Sigmoid colon (tissue), 7 donors: ENCODE measurements at regions of chr16 and their contacts with region 1.

Region 1: DNA sequence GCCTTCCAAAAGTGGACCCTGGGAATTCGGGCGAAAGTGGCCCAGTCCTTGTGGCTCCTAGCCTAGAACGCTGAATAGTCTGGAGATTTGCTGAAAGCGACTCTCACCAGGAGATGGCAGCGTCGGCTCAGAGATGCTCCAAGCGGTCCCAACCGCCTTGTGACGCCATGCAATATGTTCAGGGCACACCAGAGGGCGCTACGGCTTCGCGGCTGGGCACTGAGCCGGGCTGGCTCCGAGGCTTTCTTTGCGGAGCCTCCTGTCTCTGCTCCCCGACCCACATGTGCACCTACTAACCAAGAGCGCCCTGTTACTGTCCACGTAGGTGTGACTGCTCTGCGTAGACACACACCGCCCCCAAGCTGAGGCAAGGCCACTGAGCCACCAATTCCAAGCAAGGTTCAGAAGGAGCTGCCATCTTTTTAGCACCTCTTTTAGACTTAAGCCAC is 36.9 kb downstream of the SYCE1L start:
- DNase-seq: peak; percentile 91
- H3K4me3 ChIP-seq: no peak overlapping the region
- H3K27ac ChIP-seq: no peak overlapping the region
- H3K4me1 ChIP-seq: peaks cover 0 to 5% (median 3%) of the 10 kb centered on the region in 4 donors
- H3K27me3 ChIP-seq: peaks cover 0 to 14% (median 0%) of the 10 kb centered on the region in 3 donors
- CTCF ChIP-seq: peak; percentile 97 to 99 (median 98)
- EP300 ChIP-seq: no peak
- POLR2A ChIP-seq: no peak

Region 2: DNA sequence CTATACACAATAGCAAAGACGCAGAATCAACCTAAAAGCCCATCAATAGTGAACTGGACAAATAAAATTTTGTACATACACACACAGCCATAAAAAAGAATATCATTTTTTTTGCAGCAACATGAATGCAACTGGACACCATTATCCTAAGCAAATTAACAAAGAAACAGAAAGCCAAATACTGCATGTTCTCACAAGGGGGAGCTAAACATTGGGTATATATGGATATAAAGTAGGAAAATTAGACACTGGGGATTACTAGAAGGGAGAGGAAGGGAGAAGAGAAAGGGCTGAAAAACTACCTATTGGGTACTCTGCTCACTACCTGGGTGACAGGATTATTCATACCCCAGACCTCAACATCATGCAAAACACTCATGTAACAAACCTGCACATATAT is 170.6 kb after region 1 on chr16:
- intact Hi-C with region 1: no loop called
- DNase-seq: no peak
- H3K4me3 ChIP-seq: no peak overlapping the region
- H3K27ac ChIP-seq: no peak overlapping the region
- H3K4me1 ChIP-seq: no peaks in the 10 kb centered on the region
- H3K27me3 ChIP-seq: no peaks in the 10 kb centered on the region
- CTCF ChIP-seq: no peak
- EP300 ChIP-seq: no peak
- POLR2A ChIP-seq: no peak

Region 3: GRCh38 chr16:77437859-77438258 is 201.8 kb after region 1 on chr16:
- intact Hi-C with region 1: no loop called
- DNase-seq: no peak
- H3K4me3 ChIP-seq: no peak overlapping the region
- H3K27ac ChIP-seq: no peak overlapping the region
- H3K4me1 ChIP-seq: peaks cover 0 to 19% (median 9%) of the 10 kb centered on the region in 4 donors
- H3K27me3 ChIP-seq: peaks cover 14 to 39% (median 26%) of the 10 kb centered on the region in 3 donors
- CTCF ChIP-seq: no peak
- EP300 ChIP-seq: no peak
- POLR2A ChIP-seq: no peak

Region 4: GRCh38 chr16:77584205-77584859 is 348.2 kb after region 1 on chr16:
- intact Hi-C with region 1: loop called (anchors 1 kb)
- DNase-seq: no peak
- H3K4me3 ChIP-seq: no peak overlapping the region
- H3K27ac ChIP-seq: no peak overlapping the region
- H3K4me1 ChIP-seq: no peaks in the 10 kb centered on the region
- H3K27me3 ChIP-seq: no peaks in the 10 kb centered on the region
- CTCF ChIP-seq: peak; percentile 75 to 91 (median 85)
- EP300 ChIP-seq: no peak
- POLR2A ChIP-seq: no peak

Region 5: GRCh38 chr16:77660311-77660710 is 424.2 kb after region 1 on chr16:
- intact Hi-C with region 1: loop called (anchors 5 kb)
- DNase-seq: no peak
- H3K4me3 ChIP-seq: no peak overlapping the region
- H3K27ac ChIP-seq: no peak overlapping the region
- H3K4me1 ChIP-seq: peaks cover 0 to 2% (median 0%) of the 10 kb centered on the region in 4 donors
- H3K27me3 ChIP-seq: peaks cover 0 to 7% (median 0%) of the 10 kb centered on the region in 3 donors
- CTCF ChIP-seq: peak in 2 of 4 experiments; percentile 21 to 33
- EP300 ChIP-seq: no peak
- POLR2A ChIP-seq: no peak